PC-9 (cell line): ENCODE measurements at regions of chr2 and their contacts with region 1.

Region 1: GRCh38 chr2:237744613-237745249 is 53.8 kb upstream of the RBM44 start:
- DNase-seq: peak in 1 of 2 experiments; percentile 84
- H3K4me3 ChIP-seq: no peak overlapping the region
- H3K27ac ChIP-seq: no peak overlapping the region; the same call in 1 of the 2 replicates
- H3K4me1 ChIP-seq: peaks cover 35% of the 10 kb centered on the region
- H3K27me3 ChIP-seq: no peaks in the 10 kb centered on the region
- CTCF ChIP-seq: peak; percentile 94

Region 2: GRCh38 chr2:237154082-237154638 is 590.6 kb before region 1 on chr2:
- CTCF ChIA-PET with region 1: no interaction called
- POLR2A ChIA-PET with region 1: no interaction called
- intact Hi-C with region 1: loop called (anchors 5 kb)
- DNase-seq: peak; percentile 52 to 69
- H3K4me3 ChIP-seq: no peak overlapping the region
- H3K27ac ChIP-seq: no peak overlapping the region
- H3K4me1 ChIP-seq: no peaks in the 10 kb centered on the region
- H3K27me3 ChIP-seq: no peaks in the 10 kb centered on the region
- CTCF ChIP-seq: peak; percentile 90

Region 3: DNA sequence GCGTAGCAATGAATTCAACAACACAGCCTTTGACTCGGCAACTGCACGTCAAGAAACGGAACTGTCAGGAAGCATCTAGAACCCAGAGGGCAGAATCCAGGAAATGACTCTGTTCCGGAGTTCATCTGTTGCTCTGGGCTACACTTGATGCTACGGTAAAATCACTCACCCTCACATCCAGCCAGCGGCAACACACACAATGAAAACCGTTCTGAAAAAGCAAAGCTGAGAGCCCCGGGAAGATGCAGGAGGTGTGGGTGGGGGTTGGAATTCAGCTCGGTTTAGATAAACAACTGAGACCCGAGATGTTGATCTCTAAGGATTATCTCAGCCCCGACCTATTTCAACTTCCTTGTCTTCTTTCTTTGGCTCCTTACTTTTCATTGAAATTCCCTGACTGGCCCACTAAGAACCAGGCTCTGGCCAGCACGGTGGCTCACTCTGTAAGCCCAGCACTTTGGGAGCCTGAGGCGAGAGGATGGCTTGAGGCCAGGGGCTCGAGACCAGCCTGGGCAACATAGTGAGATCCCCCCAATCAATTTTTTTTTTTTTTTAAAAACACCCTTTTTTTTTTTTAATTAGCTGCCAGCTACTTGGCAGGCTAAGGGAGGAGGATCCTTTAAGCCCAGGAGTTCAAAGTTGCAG is 140.9 kb before region 1 on chr2:
- CTCF ChIA-PET with region 1: interaction called, 3 read pairs
- POLR2A ChIA-PET with region 1: no interaction called
- intact Hi-C with region 1: loop called (anchors 1 kb)
- DNase-seq: no peak
- H3K4me3 ChIP-seq: no peak overlapping the region
- H3K27ac ChIP-seq: no peak overlapping the region
- H3K4me1 ChIP-seq: no peaks in the 10 kb centered on the region
- H3K27me3 ChIP-seq: no peaks in the 10 kb centered on the region
- CTCF ChIP-seq: no peak

Region 4: DNA sequence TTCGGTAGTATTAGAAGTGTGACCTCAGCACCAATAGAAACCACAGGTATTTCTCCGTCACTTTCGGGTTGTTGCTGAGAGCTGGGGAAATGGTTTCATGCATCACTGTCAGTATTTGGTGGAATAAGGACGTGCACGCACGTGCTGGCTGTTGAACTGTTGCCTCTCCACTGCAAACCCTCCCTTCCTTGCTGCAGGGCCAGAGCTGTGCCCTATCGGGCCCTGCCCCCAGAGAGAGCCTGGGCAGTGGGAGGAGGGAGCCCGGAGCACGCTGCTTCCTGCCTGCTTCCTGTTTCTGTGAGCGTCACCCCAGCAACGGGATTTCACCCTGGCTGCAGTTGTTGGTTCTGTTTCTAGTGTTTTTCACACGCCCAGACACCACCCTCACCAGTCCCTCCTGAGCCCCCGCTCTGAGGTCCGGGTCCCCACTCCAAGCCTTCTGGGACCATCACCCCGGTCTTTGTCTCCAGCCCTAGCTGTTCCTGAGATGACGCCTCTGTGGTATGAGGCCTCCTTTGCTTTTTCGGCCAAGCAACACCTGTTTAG is 69.9 kb before region 1 on chr2:
- CTCF ChIA-PET with region 1: interaction called, 4 read pairs
- POLR2A ChIA-PET with region 1: no interaction called
- intact Hi-C with region 1: loop called (anchors 1 kb)
- DNase-seq: peak in 1 of 2 experiments; percentile 88
- H3K4me3 ChIP-seq: no peak overlapping the region
- H3K27ac ChIP-seq: no peak overlapping the region
- H3K4me1 ChIP-seq: peaks cover 27% of the 10 kb centered on the region
- H3K27me3 ChIP-seq: no peaks in the 10 kb centered on the region
- CTCF ChIP-seq: no peak

Region 5: GRCh38 chr2:237702441-237703391 is 42.0 kb before region 1 on chr2:
- CTCF ChIA-PET with region 1: interaction called, 7 read pairs
- POLR2A ChIA-PET with region 1: no interaction called
- intact Hi-C with region 1: loop called (anchors 2 kb)
- DNase-seq: peak in 1 of 2 experiments; percentile 54
- H3K4me3 ChIP-seq: no peak overlapping the region
- H3K27ac ChIP-seq: no peak overlapping the region
- H3K4me1 ChIP-seq: peaks cover 5% of the 10 kb centered on the region
- H3K27me3 ChIP-seq: no peaks in the 10 kb centered on the region
- CTCF ChIP-seq: no peak